OCI-LY7 (cell line): ENCODE measurements at regions of chr1 and their contacts with region 1.

Region 1: DNA sequence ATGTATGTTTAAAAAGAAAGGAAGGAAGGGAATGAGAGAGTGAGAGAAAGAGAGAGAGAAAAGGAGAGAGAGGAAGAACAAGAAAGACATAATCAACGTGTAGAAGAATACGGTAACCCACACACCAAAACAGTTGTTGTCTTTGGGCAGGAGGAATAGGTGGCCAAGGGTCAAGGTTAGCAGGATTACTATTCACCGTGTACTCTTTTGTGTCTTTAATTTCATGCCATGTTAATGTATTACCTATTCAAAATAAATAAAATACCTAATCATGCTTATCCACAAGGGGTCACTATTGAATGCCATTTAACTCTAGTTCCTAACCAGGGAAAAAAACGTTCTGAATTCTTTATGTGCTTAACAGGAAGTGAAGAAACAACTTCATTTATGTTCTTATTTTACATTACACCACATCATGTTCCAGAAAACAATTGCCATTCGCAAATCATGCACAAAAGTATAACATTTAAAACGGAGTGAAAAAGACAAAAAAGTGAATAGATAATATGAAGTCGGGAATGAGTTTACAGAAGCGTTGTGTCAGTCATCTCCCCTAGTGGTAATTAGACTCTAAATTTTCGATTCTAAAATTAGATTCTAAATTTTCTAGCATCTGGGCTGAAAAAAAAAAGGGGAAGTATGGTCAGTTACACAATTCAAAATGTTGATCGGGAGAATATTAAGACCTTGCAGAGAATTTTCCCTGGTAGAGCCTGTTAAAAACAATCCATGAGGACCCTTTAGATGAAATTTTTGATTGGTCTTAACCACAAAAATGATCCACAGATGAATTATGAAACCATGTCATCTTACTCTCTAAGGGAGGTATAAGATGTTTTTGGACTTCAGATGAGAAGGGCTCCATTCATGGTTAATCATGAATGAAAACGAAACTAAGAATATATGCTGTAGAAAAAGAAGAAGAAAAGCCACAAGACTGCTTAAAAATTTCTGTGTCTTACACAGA is 700 bp upstream of the KMO start:
- DNase-seq: peak; percentile 91
- H3K4me3 ChIP-seq: peak overlapping the region; percentile 74
- H3K27ac ChIP-seq: peak overlapping the region; percentile 96
- H3K4me1 ChIP-seq: peaks cover 46% of the 10 kb centered on the region
- CTCF ChIP-seq: peak; percentile 92

Region 2: DNA sequence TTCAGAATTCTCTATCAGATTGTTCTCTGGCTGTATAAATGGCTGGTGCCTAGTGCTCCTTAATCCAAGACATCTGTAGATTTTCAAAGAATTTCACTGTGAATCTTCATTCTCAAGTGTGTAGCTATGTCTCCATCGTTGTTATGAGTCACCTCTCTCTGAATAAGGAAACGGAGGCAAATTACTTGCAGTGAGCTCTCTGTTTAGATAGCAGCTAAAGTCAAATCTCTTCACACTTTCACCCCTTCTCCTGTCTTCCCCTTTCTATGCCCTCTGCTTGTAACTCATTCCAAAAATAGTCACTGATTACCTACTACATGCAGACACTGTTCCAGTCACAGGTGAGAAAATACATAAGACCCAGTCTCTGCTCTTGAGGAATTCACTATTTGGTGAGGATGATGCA is 69.0 kb after region 1 on chr1:
- CTCF ChIA-PET with region 1: no interaction called
- POLR2A ChIA-PET with region 1: interaction called, 3 read pairs
- intact Hi-C with region 1: loop called (anchors 2 kb)
- DNase-seq: peak; percentile 10
- H3K4me3 ChIP-seq: no peak overlapping the region
- H3K27ac ChIP-seq: no peak overlapping the region
- H3K4me1 ChIP-seq: peaks cover 25% of the 10 kb centered on the region
- CTCF ChIP-seq: no peak

Region 3: GRCh38 chr1:241611063-241611462 is 79.6 kb after region 1 on chr1:
- CTCF ChIA-PET with region 1: no interaction called
- POLR2A ChIA-PET with region 1: interaction called, 5 read pairs
- intact Hi-C with region 1: loop called (anchors 1 kb)
- DNase-seq: peak; percentile 82
- H3K4me3 ChIP-seq: no peak overlapping the region
- H3K27ac ChIP-seq: no peak overlapping the region
- H3K4me1 ChIP-seq: peaks cover 8% of the 10 kb centered on the region
- CTCF ChIP-seq: peak; percentile 92

Region 4: DNA sequence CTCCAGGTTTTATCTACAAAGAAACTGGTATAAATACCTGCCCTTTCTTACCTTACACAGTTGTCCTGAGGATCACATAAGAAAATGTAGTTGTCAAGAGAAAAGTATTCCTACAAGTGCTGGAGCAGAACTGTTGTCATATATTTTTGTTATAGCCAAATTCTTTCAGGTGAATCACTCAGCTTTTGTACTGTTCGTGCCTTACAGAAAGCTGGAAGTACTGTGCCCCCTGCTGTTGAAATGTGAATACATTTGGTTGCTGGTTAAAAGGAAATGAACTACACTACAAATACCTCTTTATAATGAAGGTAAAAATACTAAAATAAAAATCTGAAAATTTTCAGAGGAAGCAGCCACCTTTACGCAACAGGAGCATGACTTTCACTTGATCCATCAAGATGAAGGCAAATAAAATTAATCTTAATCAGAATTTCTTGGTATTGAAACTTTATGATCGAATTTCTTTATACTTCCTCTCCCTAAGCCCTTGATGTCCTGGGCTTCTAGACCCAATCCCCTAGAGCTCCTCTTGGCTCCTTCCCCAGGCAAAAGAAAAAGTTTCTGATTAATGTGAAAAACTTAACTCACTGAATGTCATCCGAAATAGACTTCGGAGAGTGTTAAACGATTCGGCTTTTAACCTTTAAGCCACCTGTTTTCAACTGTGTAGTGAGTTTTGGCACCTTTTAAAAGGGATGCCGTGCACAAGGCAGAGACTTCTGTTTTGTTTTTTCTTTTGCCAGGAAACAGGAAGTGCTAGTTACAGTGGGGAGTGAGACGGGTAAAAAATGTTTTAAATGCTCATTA is 96.2 kb after region 1 on chr1:
- CTCF ChIA-PET with region 1: no interaction called
- POLR2A ChIA-PET with region 1: interaction called, 4 read pairs
- intact Hi-C with region 1: loop called (anchors 1 kb)
- DNase-seq: peak; percentile 81
- H3K4me3 ChIP-seq: peak overlapping the region; percentile 51
- H3K27ac ChIP-seq: peak overlapping the region; percentile 70
- H3K4me1 ChIP-seq: peaks cover 20% of the 10 kb centered on the region
- CTCF ChIP-seq: peak; percentile 93

Region 5: GRCh38 chr1:241847796-241848685 is 316.6 kb after region 1 on chr1 and contains the start of gene EXO1:
- CTCF ChIA-PET with region 1: no interaction called
- POLR2A ChIA-PET with region 1: interaction called, 4 read pairs
- intact Hi-C with region 1: loop called (anchors 2 kb)
- DNase-seq: peak; percentile 94
- H3K4me3 ChIP-seq: peak within 1 kb of the TSS; percentile 98
- H3K27ac ChIP-seq: peak within 1 kb of the TSS; percentile 94
- H3K4me1 ChIP-seq: peaks cover 26% of the 10 kb centered on the region
- CTCF ChIP-seq: peak; percentile 75
- total RNA-seq, gene EXO1: 60.3 and 67.7 TPM in 2 replicates

Region 6: DNA sequence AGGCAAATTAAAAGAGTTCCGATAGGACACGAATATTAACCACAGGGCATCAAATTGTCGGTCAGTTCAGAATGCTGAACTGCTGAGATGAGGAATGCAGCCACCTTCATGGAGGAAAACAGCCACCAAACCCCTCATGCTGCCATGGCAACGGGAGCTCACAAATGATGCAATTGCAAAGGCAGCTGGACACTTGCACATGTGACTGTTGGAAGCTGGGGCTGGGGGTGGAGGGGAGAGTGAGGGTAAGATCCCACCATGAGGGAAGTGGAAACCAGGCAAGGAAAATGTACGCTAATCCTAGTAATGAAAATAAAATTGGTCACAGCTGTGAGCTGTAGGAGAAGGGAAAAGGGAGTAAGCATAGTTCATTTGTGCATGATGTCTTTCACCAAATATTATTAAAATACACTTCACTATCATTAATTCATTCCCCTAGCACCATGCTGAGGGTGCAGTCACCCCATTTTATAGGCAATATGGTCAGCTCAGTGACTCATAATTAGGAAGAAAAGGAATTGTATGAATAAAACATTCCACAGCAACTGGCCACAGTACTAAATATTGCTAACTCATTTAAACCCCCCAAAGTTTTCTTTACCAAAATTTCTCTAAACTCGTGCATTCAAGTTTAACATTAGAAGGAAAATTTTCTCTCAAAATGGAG is 441.4 kb after region 1 on chr1:
- CTCF ChIA-PET with region 1: no interaction called
- POLR2A ChIA-PET with region 1: no interaction called
- intact Hi-C with region 1: no loop called
- DNase-seq: no peak
- H3K4me3 ChIP-seq: no peak overlapping the region
- H3K27ac ChIP-seq: no peak overlapping the region
- H3K4me1 ChIP-seq: no peaks in the 10 kb centered on the region
- CTCF ChIP-seq: no peak

Region 7: GRCh38 chr1:241985787-241986186 is 454.3 kb after region 1 on chr1:
- CTCF ChIA-PET with region 1: no interaction called
- POLR2A ChIA-PET with region 1: no interaction called
- intact Hi-C with region 1: loop called (anchors 5 kb)
- DNase-seq: peak; percentile 39
- H3K4me3 ChIP-seq: no peak overlapping the region
- H3K27ac ChIP-seq: no peak overlapping the region
- H3K4me1 ChIP-seq: no peaks in the 10 kb centered on the region
- CTCF ChIP-seq: peak; percentile 67

Region 8: DNA sequence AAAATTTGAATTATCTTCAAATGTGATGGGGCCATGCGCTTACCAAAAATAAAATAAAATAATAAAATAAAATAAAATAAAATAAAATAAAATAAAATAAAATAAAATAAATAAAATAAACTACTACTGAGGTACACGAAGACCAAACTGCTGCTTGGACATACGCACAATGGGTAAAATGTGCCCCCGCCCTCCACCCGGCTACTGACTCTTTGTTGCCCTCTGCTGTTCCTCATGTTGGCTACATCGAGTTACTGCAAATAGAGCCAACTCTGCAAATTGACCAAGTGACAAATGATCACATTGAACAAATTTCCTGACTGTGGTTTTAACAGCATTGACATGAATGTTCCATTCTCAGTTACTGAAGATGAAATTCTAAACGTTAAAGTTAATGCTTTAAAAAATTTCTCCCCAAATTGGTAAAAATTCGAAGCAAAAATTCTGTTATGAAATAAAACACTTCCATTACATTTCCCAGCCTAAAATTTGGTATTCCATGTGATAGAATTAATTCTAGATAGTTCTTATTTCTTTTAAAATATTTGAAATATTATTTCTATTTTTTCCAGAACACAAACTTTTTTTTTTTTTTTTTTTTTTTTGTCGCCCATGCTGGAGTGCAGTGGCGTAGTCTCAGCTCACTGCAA is 486.2 kb after region 1 on chr1:
- CTCF ChIA-PET with region 1: no interaction called
- POLR2A ChIA-PET with region 1: no interaction called
- intact Hi-C with region 1: loop called (anchors 1 kb)
- DNase-seq: peak; percentile 53
- H3K4me3 ChIP-seq: no peak overlapping the region
- H3K27ac ChIP-seq: no peak overlapping the region
- H3K4me1 ChIP-seq: no peaks in the 10 kb centered on the region
- CTCF ChIP-seq: peak; percentile 80